Naive thymus-derived CD4-positive, alpha-beta T cell (primary cell): ENCODE measurements at regions of chr14 and their contacts with region 1.

Region 1: DNA sequence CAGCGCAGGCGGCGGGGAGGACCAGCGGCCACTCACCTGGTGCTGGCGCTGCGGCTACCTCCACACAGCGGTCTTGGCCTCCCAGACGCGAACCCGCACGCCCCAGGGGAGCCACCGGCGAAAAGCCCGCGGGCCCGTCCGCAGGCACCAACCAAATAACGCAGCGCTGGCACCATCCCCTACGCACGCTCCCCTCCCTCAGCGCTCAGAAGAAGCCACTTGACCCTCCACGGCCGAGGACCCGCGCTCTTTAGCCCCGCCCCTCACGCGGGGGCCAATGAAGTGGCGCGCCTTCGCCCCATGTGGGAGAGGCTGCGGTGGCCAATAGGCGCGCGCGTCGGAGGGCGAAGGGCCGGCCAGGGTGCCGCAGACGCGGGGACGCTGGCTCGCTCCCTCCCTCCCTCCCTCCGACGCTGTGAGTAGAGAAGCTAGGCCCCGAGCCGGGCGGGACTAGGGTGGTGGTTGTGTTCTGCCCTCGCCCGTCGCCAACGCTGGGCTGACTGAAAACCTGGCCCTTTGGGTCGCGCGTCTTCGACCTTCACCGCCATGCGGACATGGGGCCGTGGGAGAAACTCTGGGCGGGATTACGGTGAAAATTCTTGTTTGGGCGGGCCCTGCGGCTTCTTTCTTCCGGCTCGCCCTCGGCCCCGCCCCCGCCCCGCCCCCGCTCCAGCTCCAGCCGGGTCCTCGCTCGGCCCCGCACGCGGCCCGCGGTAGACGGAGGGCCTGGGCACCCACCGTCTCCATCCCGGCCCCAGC is at the starts of genes DMAC2L and L2HGDH:
- DNase-seq: peak; percentile 80 to 95 (median 88)
- ATAC-seq: peak; percentile 94
- H3K4me3 ChIP-seq: peak within 1 kb of the TSS; percentile 88
- H3K4me3 Mint-ChIP-seq: peak within 1 kb of the TSS; percentile 86 to 99 (median 96)
- H3K27ac ChIP-seq: peak within 1 kb of the TSS; percentile 84
- H3K27ac Mint-ChIP-seq: peak within 1 kb of the TSS; percentile 95 to 99 (median 98)
- H3K4me1 ChIP-seq: peaks cover 11 to 12% of the 10 kb centered on the region in 2 donors
- H3K4me1 Mint-ChIP-seq: peaks cover 16 to 56% (median 46%) of the 10 kb centered on the region in 7 donors
- H3K27me3 ChIP-seq: no peaks in the 10 kb centered on the region
- H3K27me3 Mint-ChIP-seq: no peaks in the 10 kb centered on the region
- total RNA-seq, gene DMAC2L: 15.5 to 21.2 (median 16.7) TPM
- total RNA-seq, gene L2HGDH: 3.7 to 10.1 (median 4.8) TPM

Region 2: GRCh38 chr14:49585803-49586672 is 726.1 kb before region 1 on chr14 and contains the start of gene RPS29:
- CTCF ChIA-PET with region 1: no interaction called
- POLR2A ChIA-PET with region 1: interaction called, 4 read pairs
- intact Hi-C with region 1: loop called (anchors 1 to 5 kb)
- DNase-seq: peak; percentile 97 to 99 (median 99)
- ATAC-seq: peak; percentile 91
- H3K4me3 ChIP-seq: peak within 1 kb of the TSS; percentile 98
- H3K4me3 Mint-ChIP-seq: peak within 1 kb of the TSS; percentile 87 to 100 (median 94)
- H3K27ac ChIP-seq: peak within 1 kb of the TSS; percentile 84
- H3K27ac Mint-ChIP-seq: peak within 1 kb of the TSS; percentile 90 to 100 (median 98)
- H3K4me1 ChIP-seq: peaks cover 19 to 21% of the 10 kb centered on the region in 2 donors
- H3K4me1 Mint-ChIP-seq: peaks cover 33 to 60% (median 46%) of the 10 kb centered on the region in 7 donors
- H3K27me3 ChIP-seq: no peaks in the 10 kb centered on the region
- H3K27me3 Mint-ChIP-seq: peaks cover 0 to 5% (median 0%) of the 10 kb centered on the region in 5 donors
- total RNA-seq, gene RPS29: 2,254 to 4,907 (median 2,729) TPM

Region 3: GRCh38 chr14:49692811-49693734 is 619.1 kb before region 1 on chr14 and contains the start of gene KLHDC1:
- CTCF ChIA-PET with region 1: interaction called, 3 read pairs
- POLR2A ChIA-PET with region 1: no interaction called
- intact Hi-C with region 1: loop called (anchors 1 to 5 kb)
- DNase-seq: peak; percentile 70 to 84 (median 80)
- ATAC-seq: peak; percentile 89
- H3K4me3 ChIP-seq: peak within 1 kb of the TSS; percentile 67
- H3K4me3 Mint-ChIP-seq: peak within 1 kb of the TSS; percentile 81 to 100 (median 89)
- H3K27ac ChIP-seq: peak within 1 kb of the TSS; percentile 80
- H3K27ac Mint-ChIP-seq: peak within 1 kb of the TSS; percentile 79 to 99 (median 94)
- H3K4me1 ChIP-seq: peaks cover 8 to 19% of the 10 kb centered on the region in 2 donors
- H3K4me1 Mint-ChIP-seq: peaks cover 20 to 52% (median 43%) of the 10 kb centered on the region in 7 donors
- H3K27me3 ChIP-seq: no peaks in the 10 kb centered on the region
- H3K27me3 Mint-ChIP-seq: no peaks in the 10 kb centered on the region
- total RNA-seq, gene KLHDC1: 2.6 to 18.0 (median 12.2) TPM

Region 4: GRCh38 chr14:50116181-50116956 is 195.8 kb before region 1 on chr14 and contains the start of gene VCPKMT:
- CTCF ChIA-PET with region 1: no interaction called
- POLR2A ChIA-PET with region 1: interaction called, 3 read pairs
- intact Hi-C with region 1: loop called (anchors 1 to 5 kb)
- DNase-seq: peak; percentile 93 to 97 (median 97)
- ATAC-seq: peak; percentile 99
- H3K4me3 ChIP-seq: peak within 1 kb of the TSS; percentile 74
- H3K4me3 Mint-ChIP-seq: peak within 1 kb of the TSS; percentile 92 to 98 (median 96)
- H3K27ac ChIP-seq: peak within 1 kb of the TSS; percentile 94
- H3K27ac Mint-ChIP-seq: peak within 1 kb of the TSS; percentile 97 to 99 (median 98)
- H3K4me1 ChIP-seq: peaks cover 18 to 20% of the 10 kb centered on the region in 2 donors
- H3K4me1 Mint-ChIP-seq: peaks cover 11 to 37% (median 23%) of the 10 kb centered on the region in 7 donors
- H3K27me3 ChIP-seq: no peaks in the 10 kb centered on the region
- H3K27me3 Mint-ChIP-seq: no peaks in the 10 kb centered on the region
- total RNA-seq, gene VCPKMT: 10.3 to 25.9 (median 17.4) TPM

Region 5: DNA sequence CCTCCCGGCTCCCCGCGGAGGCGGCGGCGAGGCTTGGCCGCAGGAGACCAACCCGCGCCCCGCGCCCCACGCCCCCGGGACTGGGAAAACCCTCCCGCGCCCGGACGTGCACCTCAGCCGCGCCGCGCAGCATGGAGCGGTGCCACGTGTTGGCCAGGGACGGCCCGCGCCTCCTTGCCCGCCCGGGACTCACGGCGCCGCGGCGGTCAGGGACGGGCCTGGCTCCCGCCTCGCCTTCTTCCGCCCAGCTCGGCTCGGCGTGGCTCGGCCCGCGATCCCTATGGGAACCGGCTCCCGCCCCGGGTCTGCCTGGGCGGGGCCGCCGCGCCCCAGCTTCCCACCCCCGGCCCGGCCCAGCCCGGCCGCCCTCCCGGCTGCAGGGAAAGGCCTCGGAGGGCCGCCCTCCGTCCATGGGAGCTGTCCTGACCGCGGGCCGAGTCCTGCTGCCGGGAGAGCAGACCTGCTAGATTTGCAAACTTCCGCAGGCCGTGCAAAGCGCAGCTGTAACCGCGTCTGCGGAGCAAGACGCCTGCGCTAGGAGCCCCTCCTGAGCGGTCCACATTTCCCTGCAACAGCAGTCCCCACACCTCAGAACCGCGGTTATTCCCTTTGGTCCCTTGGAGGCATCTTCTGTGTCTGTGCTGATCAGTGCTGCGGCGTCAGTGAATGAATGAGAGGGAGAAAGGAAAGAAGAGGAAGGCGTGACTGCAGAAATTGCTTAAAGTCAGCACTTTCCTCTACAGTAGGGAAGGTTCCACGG is 84.7 kb after region 1 on chr14 and contains the start of gene CDKL1:
- CTCF ChIA-PET with region 1: no interaction called
- POLR2A ChIA-PET with region 1: no interaction called
- intact Hi-C with region 1: loop called in 1 of 2 experiments (anchors 2 kb)
- DNase-seq: peak; percentile 9 to 74 (median 17)
- ATAC-seq: peak; percentile 78
- H3K4me3 ChIP-seq: peak within 1 kb of the TSS; percentile 78
- H3K4me3 Mint-ChIP-seq: peak within 1 kb of the TSS; percentile 83 to 95 (median 89)
- H3K27ac ChIP-seq: no peak within 1 kb of the TSS
- H3K27ac Mint-ChIP-seq: peak within 1 kb of the TSS in 8 of 9 donors; percentile 14 to 80 (median 44)
- H3K4me1 ChIP-seq: no peaks in the 10 kb centered on the region
- H3K4me1 Mint-ChIP-seq: peaks cover 11 to 24% (median 12%) of the 10 kb centered on the region in 7 donors
- H3K27me3 ChIP-seq: no peaks in the 10 kb centered on the region
- H3K27me3 Mint-ChIP-seq: peaks cover 0 to 24% (median 6%) of the 10 kb centered on the region in 5 donors
- total RNA-seq, gene CDKL1: 2.6 to 14.8 (median 4.9) TPM

Region 6: GRCh38 chr14:50830932-50831725 is 519.0 kb after region 1 on chr14 and contains the start of gene NIN:
- CTCF ChIA-PET with region 1: no interaction called
- POLR2A ChIA-PET with region 1: no interaction called
- intact Hi-C with region 1: loop called (anchors 1 to 2 kb)
- DNase-seq: peak; percentile 58 to 80 (median 74)
- ATAC-seq: peak; percentile 91
- H3K4me3 ChIP-seq: peak within 1 kb of the TSS; percentile 80
- H3K4me3 Mint-ChIP-seq: peak within 1 kb of the TSS; percentile 91 to 99 (median 96)
- H3K27ac ChIP-seq: peak within 1 kb of the TSS; percentile 84
- H3K27ac Mint-ChIP-seq: peak within 1 kb of the TSS; percentile 85 to 99 (median 95)
- H3K4me1 ChIP-seq: peaks cover 40 to 42% of the 10 kb centered on the region in 2 donors
- H3K4me1 Mint-ChIP-seq: peaks cover 46 to 84% (median 74%) of the 10 kb centered on the region in 7 donors
- H3K27me3 ChIP-seq: no peaks in the 10 kb centered on the region
- H3K27me3 Mint-ChIP-seq: peaks cover 0 to 13% (median 0%) of the 10 kb centered on the region in 5 donors
- total RNA-seq, gene NIN: 84.5 to 149 (median 128) TPM